PC-9 (cell line): ENCODE measurements at regions of chr16 and their contacts with region 1.

Region 1: DNA sequence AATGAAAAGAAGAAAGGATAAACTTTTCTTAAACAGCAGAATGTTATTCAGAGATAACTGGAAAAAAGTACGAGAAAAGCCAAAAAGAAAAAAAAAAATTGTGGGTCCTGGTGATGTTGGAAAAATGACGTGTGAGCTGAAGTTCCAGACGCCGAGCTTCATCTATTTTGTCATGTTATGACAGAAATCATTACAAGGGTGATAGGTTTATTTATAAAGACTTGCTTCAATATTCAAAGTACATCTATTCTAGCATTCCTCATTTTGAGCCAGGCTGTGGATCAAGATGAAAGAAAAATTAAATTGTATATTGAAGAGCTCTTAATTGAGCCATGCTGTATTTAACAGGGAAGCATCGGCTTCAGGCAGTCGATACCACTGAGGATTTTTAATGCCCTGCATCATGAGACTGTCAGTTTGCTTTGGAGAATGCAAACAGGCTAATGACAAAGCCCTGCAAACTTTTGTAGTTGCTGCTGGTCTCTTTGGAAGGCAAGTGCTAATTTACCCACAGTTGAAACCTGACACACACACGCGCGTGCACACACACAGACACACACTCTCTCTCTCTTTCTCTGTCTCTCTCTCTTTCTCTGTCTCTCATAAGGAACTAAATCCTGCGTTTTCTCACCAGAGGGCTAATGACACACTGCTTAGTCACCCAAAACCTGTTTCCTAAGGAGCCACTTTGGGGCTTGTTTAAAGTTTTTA is 110.7 kb downstream of the WWOX start:
- DNase-seq: peak; percentile 57 to 96
- H3K4me3 ChIP-seq: peak overlapping the region; percentile 20; the same call in 1 of the 2 replicates
- H3K27ac ChIP-seq: peak overlapping the region; percentile 95
- H3K4me1 ChIP-seq: peaks cover 50% of the 10 kb centered on the region
- H3K27me3 ChIP-seq: no peaks in the 10 kb centered on the region
- CTCF ChIP-seq: no peak

Region 2: GRCh38 chr16:78364556-78364880 is 154.4 kb after region 1 on chr16:
- CTCF ChIA-PET with region 1: no interaction called
- POLR2A ChIA-PET with region 1: no interaction called
- intact Hi-C with region 1: no loop called
- DNase-seq: no peak
- H3K4me3 ChIP-seq: no peak overlapping the region
- H3K27ac ChIP-seq: no peak overlapping the region
- H3K4me1 ChIP-seq: no peaks in the 10 kb centered on the region
- H3K27me3 ChIP-seq: no peaks in the 10 kb centered on the region
- CTCF ChIP-seq: no peak

Region 3: DNA sequence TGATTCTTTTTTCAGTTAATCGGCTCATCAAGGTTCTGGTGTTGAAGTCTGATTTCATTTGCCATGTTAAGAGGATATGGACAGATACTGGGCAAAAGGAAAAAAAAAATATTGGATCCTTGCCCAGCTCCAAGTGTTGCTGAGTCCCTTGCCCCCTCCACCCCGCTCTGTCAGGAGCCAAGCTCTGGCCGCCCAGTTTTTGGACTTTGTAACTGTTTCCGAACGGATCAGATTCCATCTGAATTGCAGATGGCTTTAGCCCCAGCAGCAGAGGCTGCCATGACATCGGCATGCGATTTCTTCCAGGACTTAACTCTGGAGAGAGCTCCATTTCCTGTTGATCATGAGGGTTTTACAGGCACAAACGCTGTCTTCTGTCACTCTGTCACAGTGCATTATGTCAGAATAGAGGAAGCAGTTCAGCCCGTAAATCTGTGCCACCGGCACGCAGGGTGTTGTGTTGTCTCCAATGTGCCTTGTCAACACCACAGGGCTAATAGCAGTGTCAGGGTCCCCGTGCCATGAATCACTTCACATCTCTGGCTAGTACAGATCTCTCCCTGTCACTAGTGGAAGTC is 774.9 kb after region 1 on chr16:
- CTCF ChIA-PET with region 1: no interaction called
- POLR2A ChIA-PET with region 1: no interaction called
- intact Hi-C with region 1: loop called (anchors 5 kb)
- DNase-seq: no peak
- H3K4me3 ChIP-seq: no peak overlapping the region
- H3K27ac ChIP-seq: no peak overlapping the region
- H3K4me1 ChIP-seq: peaks cover 37% of the 10 kb centered on the region
- H3K27me3 ChIP-seq: no peaks in the 10 kb centered on the region
- CTCF ChIP-seq: no peak

Region 4: GRCh38 chr16:79008036-79008868 is 798.1 kb after region 1 on chr16:
- CTCF ChIA-PET with region 1: no interaction called
- POLR2A ChIA-PET with region 1: no interaction called
- intact Hi-C with region 1: loop called (anchors 5 kb)
- DNase-seq: peak in 1 of 2 experiments; percentile 45
- H3K4me3 ChIP-seq: no peak overlapping the region
- H3K27ac ChIP-seq: peak overlapping the region; percentile 84
- H3K4me1 ChIP-seq: peaks cover 21% of the 10 kb centered on the region
- H3K27me3 ChIP-seq: no peaks in the 10 kb centered on the region
- CTCF ChIP-seq: no peak

Region 5: DNA sequence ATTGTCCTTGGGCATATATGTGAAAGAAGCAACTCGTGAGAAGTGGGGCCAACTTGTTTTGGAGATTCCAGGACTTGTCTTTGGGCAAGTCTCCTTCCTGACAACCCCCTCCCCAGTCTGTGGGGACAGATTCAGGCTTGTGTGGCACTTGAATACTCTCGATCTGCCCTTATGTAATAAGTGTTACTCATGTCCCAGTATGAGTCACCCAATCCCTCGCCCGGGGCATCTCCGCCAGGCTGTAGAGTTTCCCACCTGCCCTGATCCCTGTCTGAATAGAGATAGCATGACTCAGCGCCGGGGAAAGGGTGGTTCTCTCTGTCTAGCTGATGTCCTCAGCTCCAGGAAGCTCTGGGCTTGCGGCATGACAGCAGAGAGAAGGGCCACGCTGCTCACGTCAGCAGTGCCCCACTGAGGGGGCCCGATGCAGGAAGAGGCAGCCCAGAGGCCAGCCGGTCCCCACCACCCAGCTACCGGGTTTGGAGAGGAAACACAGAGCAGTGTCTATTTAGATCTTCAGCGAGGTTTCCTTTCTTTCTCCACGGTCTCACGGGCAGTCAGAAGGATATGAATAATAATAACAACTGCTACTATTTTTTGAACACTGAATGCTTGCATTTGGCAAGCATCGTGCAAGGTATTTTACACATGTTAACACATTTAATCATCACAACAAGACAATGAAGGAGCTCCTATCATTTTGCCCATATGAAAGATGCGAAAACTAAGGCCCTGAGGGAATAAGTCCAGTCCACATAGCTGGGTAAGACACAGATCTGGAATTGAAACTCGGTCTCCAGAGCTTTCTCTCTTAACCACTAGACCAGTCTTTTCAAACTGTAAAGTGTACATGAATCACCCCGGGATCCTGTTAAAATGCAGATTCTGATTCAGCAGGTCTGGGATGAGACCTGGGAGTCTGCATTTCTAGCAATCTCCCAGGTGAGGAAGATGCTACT is 1817.2 kb after region 1 on chr16:
- CTCF ChIA-PET with region 1: no interaction called
- POLR2A ChIA-PET with region 1: no interaction called
- intact Hi-C with region 1: loop called (anchors 5 kb)
- DNase-seq: peak; percentile 95 to 96
- H3K4me3 ChIP-seq: peak overlapping the region; percentile 39; the same call in 1 of the 2 replicates
- H3K27ac ChIP-seq: peak overlapping the region; percentile 96
- H3K4me1 ChIP-seq: peaks cover 49% of the 10 kb centered on the region
- H3K27me3 ChIP-seq: no peaks in the 10 kb centered on the region
- CTCF ChIP-seq: no peak